ENCODE measurements at regions of chr15 and their contacts with region 1.

Region 1: DNA sequence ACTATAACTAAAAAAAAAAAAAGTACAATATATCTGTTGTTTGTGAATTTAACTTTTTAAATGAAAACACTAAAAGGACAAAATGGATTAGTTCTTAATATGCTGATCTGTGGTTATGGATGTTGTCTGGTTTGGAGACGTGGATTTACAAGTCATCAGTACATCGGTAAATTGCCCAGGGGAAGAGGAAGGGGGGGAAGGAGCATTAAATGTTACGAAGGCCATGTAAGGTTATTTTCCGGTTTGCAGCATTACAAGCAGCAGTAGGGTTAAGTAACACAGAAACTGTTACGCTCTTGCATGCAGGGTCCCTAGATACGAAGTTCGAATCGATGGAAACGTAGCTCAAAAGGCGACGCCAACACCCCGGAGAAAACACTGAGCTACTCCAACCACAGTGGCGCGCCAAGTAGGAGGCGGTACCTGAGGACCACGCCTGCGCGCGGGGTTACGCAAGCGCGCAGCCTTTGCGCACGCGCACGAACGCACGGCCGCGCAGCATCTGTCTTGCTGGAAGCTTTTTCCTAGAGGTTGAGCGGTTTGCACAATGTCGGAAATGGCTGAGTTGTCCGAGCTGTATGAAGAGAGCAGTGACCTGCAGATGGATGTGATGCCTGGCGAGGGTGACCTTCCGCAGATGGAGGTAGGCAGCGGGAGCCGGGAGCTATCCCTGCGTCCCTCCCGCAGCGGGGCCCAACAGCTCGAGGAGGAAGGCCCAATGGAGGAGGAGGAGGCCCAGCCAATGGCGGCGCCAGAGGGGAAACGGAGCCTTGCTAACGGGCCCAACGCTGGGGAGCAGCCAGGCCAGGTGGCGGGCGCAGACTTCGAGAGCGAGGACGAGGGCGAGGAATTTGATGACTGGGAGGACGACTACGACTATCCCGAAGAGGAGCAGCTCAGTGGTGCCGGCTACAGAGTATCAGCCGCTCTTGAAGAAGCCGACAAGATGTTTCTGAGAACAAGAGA is at the start of gene EID1:
- DNase-seq: peak; percentile 95
- ATAC-seq: peak; percentile 99
- total RNA-seq, gene EID1: 201 to 233 TPM

Region 2: GRCh38 chr15:48963524-48964113 is 85.7 kb after region 1 on chr15 and contains the start of gene SHC4:
- intact Hi-C with region 1: loop called (anchors 5 to 10 kb)
- DNase-seq: peak; percentile 83
- ATAC-seq: peak; percentile 78 to 90
- total RNA-seq, gene SHC4: 1.8 TPM

Measured in left cardiac atrium (tissue), 4 donors.